PC-3 (cell line): ENCODE measurements at regions of chr11 and their contacts with region 1.

Region 1: GRCh38 chr11:26297189-26297975 is 34.5 kb upstream of the ANO3 start:
- DNase-seq: peak; percentile 64
- ATAC-seq: peak; percentile 51
- H3K4me3 ChIP-seq: no peak overlapping the region
- H3K27ac ChIP-seq: no peak overlapping the region
- H3K4me1 ChIP-seq: no peaks in the 10 kb centered on the region
- H3K27me3 ChIP-seq: peaks cover 17% of the 10 kb centered on the region
- CTCF ChIP-seq: peak; percentile 78

Region 2: DNA sequence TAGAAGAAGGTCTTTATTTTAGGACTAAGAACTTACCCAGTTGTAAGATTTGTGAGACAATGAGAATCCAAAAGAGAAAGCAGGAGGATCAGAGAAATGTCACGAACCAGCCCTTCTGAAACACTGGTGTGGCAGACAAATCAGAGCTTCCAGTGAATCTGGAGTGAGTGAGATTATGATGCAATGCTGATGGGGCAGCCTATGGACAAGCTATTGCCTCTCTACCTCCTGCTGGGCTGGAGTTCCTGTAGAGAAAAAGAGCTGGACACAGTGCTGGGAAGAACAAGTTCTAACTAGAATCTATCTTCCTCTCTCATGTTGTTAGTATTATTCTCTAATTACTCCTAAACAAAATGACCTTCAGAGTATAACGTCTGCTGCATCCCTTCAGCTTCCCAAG is 22.5 kb after region 1 on chr11:
- CTCF ChIA-PET with region 1: interaction called, 13 read pairs
- POLR2A ChIA-PET with region 1: no interaction called
- intact Hi-C with region 1: no loop called
- DNase-seq: no peak
- ATAC-seq: no peak
- H3K4me3 ChIP-seq: no peak overlapping the region
- H3K27ac ChIP-seq: no peak overlapping the region
- H3K4me1 ChIP-seq: no peaks in the 10 kb centered on the region
- H3K27me3 ChIP-seq: peaks cover 6% of the 10 kb centered on the region; the same call in 1 of the 2 replicates
- CTCF ChIP-seq: no peak

Region 3: GRCh38 chr11:26551186-26551801 is 253.9 kb after region 1 on chr11:
- CTCF ChIA-PET with region 1: no interaction called
- POLR2A ChIA-PET with region 1: no interaction called
- intact Hi-C with region 1: loop called (anchors 1 kb)
- DNase-seq: peak; percentile 12
- ATAC-seq: no peak
- H3K4me3 ChIP-seq: no peak overlapping the region
- H3K27ac ChIP-seq: no peak overlapping the region
- H3K4me1 ChIP-seq: no peaks in the 10 kb centered on the region
- H3K27me3 ChIP-seq: peaks cover 34% of the 10 kb centered on the region
- CTCF ChIP-seq: peak; percentile 59; the same call in 1 of the 2 replicates

Region 4: DNA sequence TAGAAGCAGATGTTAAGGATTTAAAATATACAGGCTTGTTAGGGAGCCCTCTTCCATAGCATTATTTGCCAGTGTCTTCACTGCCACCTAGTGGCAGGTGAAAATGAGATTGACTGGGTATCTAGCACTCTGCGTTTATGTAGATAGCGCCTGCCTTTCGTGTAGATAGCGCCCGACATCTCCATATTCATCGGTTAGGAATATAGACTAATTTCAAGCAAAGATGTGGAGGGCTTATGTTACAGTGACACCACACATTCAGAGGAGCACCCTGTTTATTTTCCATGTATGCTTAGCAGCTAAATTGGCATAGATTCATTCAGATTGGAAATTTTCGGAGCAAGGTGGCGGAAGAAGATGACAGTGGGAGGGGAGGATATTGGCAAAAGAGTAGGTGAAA is 352.5 kb after region 1 on chr11:
- CTCF ChIA-PET with region 1: no interaction called
- POLR2A ChIA-PET with region 1: no interaction called
- intact Hi-C with region 1: loop called (anchors 1 kb)
- DNase-seq: peak; percentile 83
- ATAC-seq: peak; percentile 78
- H3K4me3 ChIP-seq: no peak overlapping the region
- H3K27ac ChIP-seq: no peak overlapping the region
- H3K4me1 ChIP-seq: no peaks in the 10 kb centered on the region
- H3K27me3 ChIP-seq: peaks cover 29% of the 10 kb centered on the region
- CTCF ChIP-seq: peak; percentile 74

Region 5: DNA sequence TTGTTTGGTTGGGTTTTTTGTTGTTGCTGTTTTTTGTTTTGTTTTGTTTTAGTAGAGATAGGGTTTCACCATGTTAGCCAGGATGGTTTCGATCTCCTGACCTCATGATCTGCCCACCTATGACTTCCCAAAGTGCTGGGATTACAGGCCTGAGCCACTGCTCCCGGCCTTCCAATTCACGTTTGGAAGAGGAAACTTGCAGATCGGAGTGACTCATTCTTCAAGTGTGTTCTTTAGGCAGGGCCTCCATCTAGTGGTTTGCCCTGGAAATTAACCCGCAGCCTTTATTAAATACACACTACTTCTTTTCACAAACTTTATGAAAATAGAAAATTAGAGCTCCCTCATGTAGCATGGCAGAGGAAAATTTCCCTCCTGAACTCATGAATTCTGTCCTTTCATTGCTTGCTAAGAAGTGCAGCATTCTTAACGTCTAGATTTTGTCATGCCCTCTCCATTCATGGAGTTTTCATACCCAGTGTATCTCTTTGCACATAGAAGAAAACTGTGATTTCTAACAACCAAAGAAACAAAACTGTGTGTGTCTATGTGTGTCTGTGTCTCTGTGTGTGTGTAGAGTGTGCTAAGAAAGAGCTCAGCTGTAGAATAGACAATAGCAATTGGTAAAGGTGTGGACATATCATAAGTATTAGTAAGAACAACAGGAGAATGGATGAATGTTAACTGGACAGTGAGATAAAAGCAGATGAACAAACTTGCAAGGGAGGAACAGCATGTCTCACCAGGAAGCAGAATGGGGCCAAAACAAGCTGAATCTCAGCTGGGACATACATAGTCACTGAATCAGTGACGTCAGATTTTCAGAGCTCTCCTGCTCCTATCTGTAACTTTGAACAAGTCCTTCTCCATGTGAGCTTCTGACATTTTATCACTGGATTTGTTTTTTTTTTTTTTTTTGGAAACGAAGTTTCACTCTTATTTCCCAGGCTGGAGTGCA is 861.6 kb after region 1 on chr11:
- CTCF ChIA-PET with region 1: no interaction called
- POLR2A ChIA-PET with region 1: no interaction called
- intact Hi-C with region 1: loop called (anchors 2 kb)
- DNase-seq: peak; percentile 76
- ATAC-seq: peak; percentile 83
- H3K4me3 ChIP-seq: no peak overlapping the region
- H3K27ac ChIP-seq: no peak overlapping the region
- H3K4me1 ChIP-seq: no peaks in the 10 kb centered on the region
- H3K27me3 ChIP-seq: no peaks in the 10 kb centered on the region
- CTCF ChIP-seq: peak; percentile 77